CD4-positive, alpha-beta T cell (primary cell): ENCODE measurements at regions of chr5 and their contacts with region 1.

Region 1: DNA sequence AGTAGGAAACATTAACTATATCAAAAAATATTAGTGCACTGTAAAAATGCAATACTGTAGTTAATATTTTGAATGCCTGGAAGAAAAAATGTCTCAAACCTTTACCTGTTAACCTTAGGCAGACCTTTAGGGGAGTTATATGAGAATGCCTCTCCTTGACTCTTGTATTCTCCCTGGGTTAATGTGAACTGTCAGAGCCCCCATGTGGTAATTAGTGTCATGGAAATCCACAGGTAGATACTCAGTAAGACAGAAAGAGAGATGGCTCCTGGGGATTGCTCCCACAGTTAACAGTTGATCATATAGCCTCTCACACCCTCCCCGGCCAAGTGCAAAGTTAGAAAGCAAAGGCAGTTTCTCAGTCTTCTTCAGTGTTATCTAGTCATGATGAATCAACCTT is 742.8 kb downstream of the NR2F1-AS1 start:
- DNase-seq: no peak
- ATAC-seq: no peak
- H3K4me3 ChIP-seq: no peak overlapping the region
- H3K4me3 Mint-ChIP-seq: no peak overlapping the region
- H3K27ac ChIP-seq: no peak overlapping the region
- H3K27ac Mint-ChIP-seq: no peak overlapping the region
- H3K4me1 ChIP-seq: no peaks in the 10 kb centered on the region
- H3K4me1 Mint-ChIP-seq: no peaks in the 10 kb centered on the region
- H3K27me3 ChIP-seq: no peaks in the 10 kb centered on the region
- H3K27me3 Mint-ChIP-seq: no peaks in the 10 kb centered on the region
- CTCF ChIP-seq: no peak

Region 2: GRCh38 chr5:92864591-92864990 is 26.3 kb after region 1 on chr5:
- CTCF ChIA-PET with region 1: no interaction called
- POLR2A ChIA-PET with region 1: no interaction called
- intact Hi-C with region 1: loop called in 1 of 2 experiments (anchors 1 kb)
- DNase-seq: no peak
- ATAC-seq: no peak
- H3K4me3 ChIP-seq: no peak overlapping the region
- H3K4me3 Mint-ChIP-seq: no peak overlapping the region
- H3K27ac ChIP-seq: no peak overlapping the region
- H3K27ac Mint-ChIP-seq: no peak overlapping the region
- H3K4me1 ChIP-seq: no peaks in the 10 kb centered on the region
- H3K4me1 Mint-ChIP-seq: no peaks in the 10 kb centered on the region
- H3K27me3 ChIP-seq: no peaks in the 10 kb centered on the region
- H3K27me3 Mint-ChIP-seq: no peaks in the 10 kb centered on the region
- CTCF ChIP-seq: no peak